ENCODE measurements at regions of chr2 and their contacts with region 1.

Region 1: GRCh38 chr2:26274058-26274613 is 29.4 kb downstream of the HADHB start:
- DNase-seq: peak; percentile 100
- H3K4me3 ChIP-seq: no peak overlapping the region
- H3K27ac ChIP-seq: peak overlapping the region; percentile 97
- H3K4me1 ChIP-seq: peaks cover 37% of the 10 kb centered on the region
- H3K27me3 ChIP-seq: no peaks in the 10 kb centered on the region
- CTCF ChIP-seq: no peak

Region 2: DNA sequence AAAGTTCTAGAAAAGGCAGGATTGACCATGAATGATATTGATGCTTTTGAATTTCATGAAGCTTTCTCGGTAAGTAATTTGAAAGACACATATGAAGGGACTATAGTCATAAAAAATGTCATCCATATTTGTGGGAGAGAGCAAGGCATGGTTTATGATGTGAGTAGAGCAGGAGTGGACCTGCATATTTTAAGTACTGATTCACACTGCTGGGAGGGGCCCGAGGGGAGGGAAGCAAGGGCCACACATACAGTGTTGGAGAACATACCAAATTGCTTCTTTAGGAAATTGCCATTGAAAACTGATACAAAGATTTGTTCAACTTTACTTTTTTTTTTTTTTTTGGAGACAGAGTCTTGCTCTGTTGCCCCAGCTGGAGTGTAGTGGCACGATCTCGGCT is 10.0 kb after region 1 on chr2:
- CTCF ChIA-PET with region 1: no interaction called
- dilution Hi-C with region 1: no loop called
- in situ Hi-C with region 1: no loop called
- intact Hi-C with region 1: loop called (anchors 1 kb)
- DNase-seq: peak; percentile 71
- H3K4me3 ChIP-seq: no peak overlapping the region
- H3K27ac ChIP-seq: peak overlapping the region; percentile 84
- H3K4me1 ChIP-seq: peaks cover 13% of the 10 kb centered on the region
- H3K27me3 ChIP-seq: no peaks in the 10 kb centered on the region
- CTCF ChIP-seq: no peak

Region 3: DNA sequence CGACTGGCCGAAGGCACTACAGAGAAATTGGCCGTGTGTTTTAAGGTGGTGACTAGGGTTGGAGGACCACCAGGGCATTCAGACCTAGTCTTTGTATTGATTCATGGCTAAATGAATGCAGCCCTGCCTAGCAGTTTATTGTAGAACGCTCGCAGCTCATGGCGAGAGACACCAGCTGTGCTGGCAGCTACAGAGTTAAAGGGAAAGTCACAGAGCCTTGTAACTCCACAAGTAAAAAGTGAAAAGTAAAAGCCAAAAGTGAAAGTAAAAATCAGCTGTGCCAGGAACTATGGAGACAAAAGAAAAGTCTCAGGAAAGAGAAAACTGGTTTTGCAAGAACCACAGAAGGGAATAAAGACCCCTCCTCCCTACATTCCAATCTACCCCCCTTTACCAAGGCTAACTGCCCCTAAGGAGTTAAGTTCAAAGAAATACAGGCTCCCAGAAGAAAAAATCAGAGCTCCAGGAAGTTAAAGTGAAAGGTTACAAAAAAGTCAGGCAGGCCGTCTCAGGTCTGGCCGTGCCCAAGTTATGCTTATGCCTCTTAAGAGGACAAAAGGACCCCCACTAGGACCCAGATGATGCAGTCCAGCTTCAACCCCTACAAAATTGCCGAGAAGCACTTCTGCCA is 25.4 kb after region 1 on chr2:
- CTCF ChIA-PET with region 1: no interaction called
- dilution Hi-C with region 1: no loop called
- in situ Hi-C with region 1: no loop called
- intact Hi-C with region 1: loop called (anchors 1 kb)
- DNase-seq: peak; percentile 60
- H3K4me3 ChIP-seq: peak overlapping the region; percentile 40 to 54 (median 45)
- H3K27ac ChIP-seq: peak overlapping the region; percentile 60
- H3K4me1 ChIP-seq: peaks cover 39% of the 10 kb centered on the region
- H3K27me3 ChIP-seq: no peaks in the 10 kb centered on the region
- CTCF ChIP-seq: no peak

Region 4: GRCh38 chr2:26330113-26330549 is 56.0 kb after region 1 on chr2:
- CTCF ChIA-PET with region 1: no interaction called
- dilution Hi-C with region 1: no loop called
- in situ Hi-C with region 1: no loop called
- intact Hi-C with region 1: loop called (anchors 2 kb)
- DNase-seq: peak; percentile 76
- H3K4me3 ChIP-seq: no peak overlapping the region
- H3K27ac ChIP-seq: no peak overlapping the region
- H3K4me1 ChIP-seq: peaks cover 10% of the 10 kb centered on the region
- H3K27me3 ChIP-seq: no peaks in the 10 kb centered on the region
- CTCF ChIP-seq: peak; percentile 94 to 95

Region 5: DNA sequence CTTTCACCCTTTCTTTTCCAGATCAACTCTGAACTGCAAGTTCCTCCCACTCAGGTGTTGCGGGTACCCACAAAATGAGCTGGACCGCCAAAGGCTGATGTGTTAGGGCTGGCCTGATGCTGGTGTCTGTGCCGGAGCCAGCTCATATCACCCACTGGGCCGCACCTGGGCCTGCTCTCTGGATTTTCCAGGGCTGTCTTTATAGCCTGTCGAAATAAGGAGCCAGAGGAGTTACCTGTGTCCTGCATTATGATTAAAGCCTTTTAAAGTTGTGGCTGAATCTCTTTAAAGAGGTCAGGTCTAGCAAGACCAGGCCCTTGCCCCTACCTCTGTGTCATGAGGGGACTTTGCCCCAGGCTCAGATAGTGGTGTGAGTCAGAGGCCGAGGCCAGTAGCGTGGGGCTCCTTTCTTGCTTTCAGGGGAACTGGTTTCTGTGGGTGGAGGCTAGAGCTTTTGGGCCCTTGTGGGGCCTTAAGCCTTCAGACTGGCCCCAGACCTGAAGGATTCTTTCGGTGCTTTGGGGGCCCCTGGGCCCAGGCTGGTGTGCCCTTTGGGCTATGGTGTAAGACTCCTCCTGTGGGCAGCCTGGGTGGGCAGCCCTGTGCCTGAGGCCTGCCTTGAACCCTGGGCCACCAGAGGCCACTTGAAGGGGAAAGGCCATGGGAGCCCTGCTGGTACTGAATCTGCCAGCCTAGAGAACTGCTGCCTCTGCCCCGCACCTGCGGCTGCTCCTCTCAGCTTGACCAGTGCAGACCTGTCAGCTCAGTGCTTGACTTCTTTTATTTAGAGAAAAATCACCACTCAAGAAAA is 182.5 kb after region 1 on chr2:
- CTCF ChIA-PET with region 1: no interaction called
- dilution Hi-C with region 1: no loop called
- in situ Hi-C with region 1: no loop called
- intact Hi-C with region 1: no loop called
- DNase-seq: peak; percentile 17
- H3K4me3 ChIP-seq: no peak overlapping the region
- H3K27ac ChIP-seq: no peak overlapping the region
- H3K4me1 ChIP-seq: no peaks in the 10 kb centered on the region
- H3K27me3 ChIP-seq: no peaks in the 10 kb centered on the region
- CTCF ChIP-seq: no peak

Measured in mammary epithelial cell (primary cell).